ENCODE measurements at regions of chr5 and their contacts with region 1.

Region 1: GRCh38 chr5:5492087-5492933 is 69.8 kb downstream of the ICE1 start:
- DNase-seq: peak; percentile 72
- ATAC-seq: peak; percentile 53
- H3K4me3 ChIP-seq: no peak overlapping the region
- H3K27ac ChIP-seq: no peak overlapping the region
- H3K4me1 ChIP-seq: no peaks in the 10 kb centered on the region
- H3K27me3 ChIP-seq: no peaks in the 10 kb centered on the region
- CTCF ChIP-seq: peak; percentile 92

Region 2: DNA sequence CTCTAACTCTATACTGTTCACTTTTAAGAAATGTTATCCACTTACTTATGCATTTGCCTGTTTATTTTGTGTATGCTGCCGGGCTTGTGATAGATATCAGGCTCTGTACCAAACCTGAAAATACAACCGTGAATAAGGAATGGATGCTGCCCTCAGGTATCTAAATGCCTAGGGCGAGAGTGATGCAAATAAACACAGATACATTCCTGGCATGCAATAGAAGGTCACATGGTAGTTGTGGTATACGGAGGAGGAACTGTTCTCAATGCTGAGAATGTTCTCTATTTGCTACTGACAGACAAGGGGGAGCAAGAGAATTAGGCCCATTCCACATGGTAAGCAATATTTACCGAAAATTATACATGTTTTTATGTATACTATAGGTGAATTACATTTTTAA is 157.9 kb after region 1 on chr5:
- CTCF ChIA-PET with region 1: no interaction called
- POLR2A ChIA-PET with region 1: no interaction called
- intact Hi-C with region 1: no loop called
- DNase-seq: peak; percentile 37
- ATAC-seq: no peak
- H3K4me3 ChIP-seq: no peak overlapping the region
- H3K27ac ChIP-seq: no peak overlapping the region
- H3K4me1 ChIP-seq: no peaks in the 10 kb centered on the region
- H3K27me3 ChIP-seq: peaks cover 94% of the 10 kb centered on the region
- CTCF ChIP-seq: no peak

Region 3: GRCh38 chr5:6576861-6577501 is 1084.7 kb after region 1 on chr5:
- CTCF ChIA-PET with region 1: no interaction called
- POLR2A ChIA-PET with region 1: no interaction called
- intact Hi-C with region 1: loop called (anchors 1 kb)
- DNase-seq: peak; percentile 96
- ATAC-seq: peak; percentile 83
- H3K4me3 ChIP-seq: no peak overlapping the region
- H3K27ac ChIP-seq: no peak overlapping the region
- H3K4me1 ChIP-seq: no peaks in the 10 kb centered on the region
- H3K27me3 ChIP-seq: peaks cover 60% of the 10 kb centered on the region
- CTCF ChIP-seq: peak; percentile 99

Measured in PC-3 (cell line).